ENCODE measurements at regions of chr7 and their contacts with region 1.

Region 1: DNA sequence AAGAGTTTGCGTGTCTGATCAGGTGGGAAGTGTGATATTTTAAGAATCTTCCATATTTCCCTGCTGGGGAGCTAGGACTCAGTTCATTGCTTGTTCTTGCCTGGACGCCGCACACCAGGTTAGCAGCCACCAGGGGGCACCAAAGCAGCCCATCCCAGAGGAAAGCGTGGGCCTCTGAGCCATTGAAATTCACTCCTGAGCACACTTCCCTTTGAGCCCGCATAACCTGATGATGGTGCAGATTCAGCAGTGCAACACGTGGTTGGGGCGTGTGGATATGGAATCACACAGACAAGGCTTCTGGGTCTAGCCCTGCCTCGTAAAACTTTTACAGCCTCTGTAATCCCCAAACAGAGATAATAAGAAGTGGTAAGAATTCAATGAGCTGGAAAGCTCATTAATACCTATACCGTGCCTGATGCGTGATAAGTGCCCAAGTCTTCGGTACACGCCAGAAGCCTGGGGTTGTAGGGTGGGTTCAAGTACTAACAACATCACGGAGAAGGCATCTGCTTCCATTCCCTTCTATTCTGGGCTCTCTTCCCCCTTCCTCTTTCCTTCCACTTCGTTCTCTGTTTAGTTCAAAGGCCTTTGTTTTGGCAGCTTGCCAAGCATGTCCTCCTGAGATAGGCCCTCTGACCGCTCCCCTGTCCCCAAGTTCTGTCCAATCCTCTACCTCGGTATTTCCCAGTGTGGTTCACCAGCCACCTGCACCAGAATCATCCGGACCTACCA is 130.1 kb upstream of the KMT2E start:
- DNase-seq: peak; percentile 94
- ATAC-seq: peak; percentile 97

Region 2: DNA sequence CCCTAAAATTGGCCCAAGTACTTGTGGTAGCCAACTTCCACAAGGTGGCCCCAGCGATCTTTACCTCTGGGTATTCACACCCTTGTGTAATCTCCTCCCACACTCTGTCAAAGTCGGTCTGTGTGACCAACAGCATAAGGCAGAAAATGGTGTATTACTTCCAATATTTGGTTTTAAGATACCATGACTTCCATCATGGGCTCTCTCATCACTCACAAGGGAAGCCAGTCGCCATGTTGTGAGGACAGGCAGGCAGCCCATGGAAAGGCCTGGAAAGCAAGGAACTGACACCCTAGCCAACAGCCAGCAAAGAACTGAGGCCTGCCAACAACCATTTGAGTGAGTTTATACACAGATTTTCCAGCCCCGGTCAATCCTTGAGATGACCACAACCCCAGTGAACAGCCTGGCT is 39.1 kb after region 1 on chr7:
- intact Hi-C with region 1: loop called (anchors 5 kb)
- DNase-seq: peak; percentile 83
- ATAC-seq: peak; percentile 95

Measured in sciatic nerve (tissue), 2 donors.